Gastrocnemius medialis (tissue), 4 donors: ENCODE measurements at regions of chr6 and their contacts with region 1.

Region 1: GRCh38 chr6:42782622-42783176 is 847 bp downstream of the BICRAL start:
- DNase-seq: peak; percentile 65 to 71
- ATAC-seq: peak; percentile 38 to 55
- H3K4me3 ChIP-seq: peak overlapping the region; percentile 72 to 96 (median 91)
- H3K27ac ChIP-seq: peak overlapping the region; percentile 95 to 100 (median 98)
- H3K4me1 ChIP-seq: peaks cover 27 to 38% of the 10 kb centered on the region in 2 donors
- H3K27me3 ChIP-seq: no peaks in the 10 kb centered on the region
- CTCF ChIP-seq: peak in 1 of 5 experiments; percentile 4
- POLR2A ChIP-seq: peak; percentile 83 to 90

Region 2: GRCh38 chr6:41735427-41736356 is 1047.0 kb before region 1 on chr6 and contains the start of gene TFEB:
- in situ Hi-C with region 1: no loop called
- intact Hi-C with region 1: loop called (anchors 10 kb)
- DNase-seq: peak; percentile 92 to 93
- ATAC-seq: peak; percentile 43 to 51
- H3K4me3 ChIP-seq: peak within 1 kb of the TSS; percentile 76 to 97 (median 90)
- H3K27ac ChIP-seq: peak within 1 kb of the TSS; percentile 97 to 99 (median 98)
- H3K4me1 ChIP-seq: peaks cover 12 to 19% of the 10 kb centered on the region in 2 donors
- H3K27me3 ChIP-seq: no peaks in the 10 kb centered on the region
- CTCF ChIP-seq: peak; percentile 91 to 100 (median 100)
- POLR2A ChIP-seq: peak; percentile 94 to 97
- total RNA-seq, gene TFEB: 82.8 to 121 (median 93.3) TPM

Region 3: GRCh38 chr6:42674780-42675179 is 107.9 kb before region 1 on chr6:
- in situ Hi-C with region 1: no loop called
- intact Hi-C with region 1: loop called (anchors 5 kb)
- DNase-seq: peak; percentile 79 to 92
- ATAC-seq: peak; percentile 94 to 95
- H3K4me3 ChIP-seq: no peak overlapping the region
- H3K27ac ChIP-seq: peak overlapping the region; percentile 80 to 93 (median 88)
- H3K4me1 ChIP-seq: peaks cover 32 to 39% of the 10 kb centered on the region in 2 donors
- H3K27me3 ChIP-seq: no peaks in the 10 kb centered on the region
- CTCF ChIP-seq: no peak
- POLR2A ChIP-seq: peak; percentile 13 to 15

Region 4: GRCh38 chr6:42819803-42820511 is 37.3 kb after region 1 on chr6:
- in situ Hi-C with region 1: no loop called
- intact Hi-C with region 1: loop called (anchors 2 kb)
- DNase-seq: no peak
- ATAC-seq: peak; percentile 31 to 39
- H3K4me3 ChIP-seq: peak overlapping the region in 2 of 4 donors; percentile 43 to 46
- H3K27ac ChIP-seq: peak overlapping the region; percentile 77 to 94 (median 84)
- H3K4me1 ChIP-seq: peaks cover 41 to 49% of the 10 kb centered on the region in 2 donors
- H3K27me3 ChIP-seq: no peaks in the 10 kb centered on the region
- CTCF ChIP-seq: peak in 4 of 5 experiments; percentile 11 to 41 (median 28)
- POLR2A ChIP-seq: no peak

Region 5: GRCh38 chr6:42879372-42880239 is 96.9 kb after region 1 on chr6 and contains the start of gene RPL7L1:
- in situ Hi-C with region 1: no loop called
- intact Hi-C with region 1: loop called (anchors 5 kb)
- DNase-seq: peak; percentile 80 to 86
- ATAC-seq: peak; percentile 96 to 99
- H3K4me3 ChIP-seq: peak within 1 kb of the TSS; percentile 75 to 92 (median 80)
- H3K27ac ChIP-seq: peak within 1 kb of the TSS; percentile 85 to 96 (median 94)
- H3K4me1 ChIP-seq: peaks cover 23 to 24% of the 10 kb centered on the region in 2 donors
- H3K27me3 ChIP-seq: no peaks in the 10 kb centered on the region
- CTCF ChIP-seq: peak in 2 of 5 experiments; percentile 20 to 41
- POLR2A ChIP-seq: peak; percentile 64 to 80
- total RNA-seq, gene RPL7L1: 59.6 to 87.1 (median 65.2) TPM

Region 6: DNA sequence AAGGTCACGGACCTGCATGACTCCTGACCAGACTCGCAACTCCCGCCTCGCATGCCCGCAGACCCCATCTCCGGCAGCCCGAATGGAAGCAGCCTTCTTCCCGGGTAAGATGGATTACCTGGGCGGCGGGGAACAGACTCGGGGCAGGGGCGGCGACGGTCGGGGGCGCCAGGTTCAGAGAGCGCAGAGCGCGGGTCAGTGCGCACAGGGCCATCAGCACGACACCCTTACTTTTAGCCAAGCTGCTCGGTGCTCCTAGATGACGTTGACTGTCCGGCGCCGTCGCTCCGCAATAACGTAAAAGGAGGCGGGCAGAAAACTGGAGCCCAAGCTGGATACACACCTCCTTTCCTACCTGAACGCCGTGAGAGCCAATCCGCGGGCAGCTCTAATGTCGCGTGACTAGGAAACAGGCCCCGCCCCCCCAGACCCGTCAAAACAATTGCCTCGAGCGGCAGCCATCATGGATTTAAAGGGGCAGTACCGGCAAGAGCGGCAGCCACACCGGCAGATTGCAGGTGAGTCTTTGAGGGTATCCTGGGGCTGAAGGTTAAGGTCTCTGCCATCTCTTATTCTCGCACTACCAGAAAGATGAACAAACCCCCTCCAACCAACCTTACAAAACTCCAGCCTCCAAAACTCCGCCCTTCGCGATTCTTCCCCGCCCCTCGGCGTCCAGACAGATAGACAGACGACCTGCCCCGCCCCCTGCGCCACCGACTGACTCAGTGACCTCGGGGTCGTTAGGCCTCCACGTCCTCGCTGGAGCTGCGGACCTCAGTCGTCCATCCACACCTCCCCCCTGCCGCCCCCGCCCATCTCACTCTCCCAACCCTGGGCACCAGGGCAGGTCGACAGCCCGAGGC is 276.7 kb after region 1 on chr6 and contains the starts of genes KLC4 and MRPL2:
- in situ Hi-C with region 1: no loop called
- intact Hi-C with region 1: loop called (anchors 1 kb)
- DNase-seq: peak; percentile 99
- ATAC-seq: peak; percentile 94 to 97
- H3K4me3 ChIP-seq: peak within 1 kb of the TSS; percentile 87 to 98 (median 92)
- H3K27ac ChIP-seq: peak within 1 kb of the TSS; percentile 90 to 99 (median 95)
- H3K4me1 ChIP-seq: peaks cover 24 to 30% of the 10 kb centered on the region in 2 donors
- H3K27me3 ChIP-seq: no peaks in the 10 kb centered on the region
- CTCF ChIP-seq: no peak
- POLR2A ChIP-seq: peak; percentile 72 to 88
- total RNA-seq, gene KLC4: 12.2 to 19.3 (median 14.6) TPM
- total RNA-seq, gene MRPL2: 34.1 to 64.9 (median 41.1) TPM